HepG2 (cell line): ENCODE measurements at regions of chr17 and their contacts with region 1.

Region 1: DNA sequence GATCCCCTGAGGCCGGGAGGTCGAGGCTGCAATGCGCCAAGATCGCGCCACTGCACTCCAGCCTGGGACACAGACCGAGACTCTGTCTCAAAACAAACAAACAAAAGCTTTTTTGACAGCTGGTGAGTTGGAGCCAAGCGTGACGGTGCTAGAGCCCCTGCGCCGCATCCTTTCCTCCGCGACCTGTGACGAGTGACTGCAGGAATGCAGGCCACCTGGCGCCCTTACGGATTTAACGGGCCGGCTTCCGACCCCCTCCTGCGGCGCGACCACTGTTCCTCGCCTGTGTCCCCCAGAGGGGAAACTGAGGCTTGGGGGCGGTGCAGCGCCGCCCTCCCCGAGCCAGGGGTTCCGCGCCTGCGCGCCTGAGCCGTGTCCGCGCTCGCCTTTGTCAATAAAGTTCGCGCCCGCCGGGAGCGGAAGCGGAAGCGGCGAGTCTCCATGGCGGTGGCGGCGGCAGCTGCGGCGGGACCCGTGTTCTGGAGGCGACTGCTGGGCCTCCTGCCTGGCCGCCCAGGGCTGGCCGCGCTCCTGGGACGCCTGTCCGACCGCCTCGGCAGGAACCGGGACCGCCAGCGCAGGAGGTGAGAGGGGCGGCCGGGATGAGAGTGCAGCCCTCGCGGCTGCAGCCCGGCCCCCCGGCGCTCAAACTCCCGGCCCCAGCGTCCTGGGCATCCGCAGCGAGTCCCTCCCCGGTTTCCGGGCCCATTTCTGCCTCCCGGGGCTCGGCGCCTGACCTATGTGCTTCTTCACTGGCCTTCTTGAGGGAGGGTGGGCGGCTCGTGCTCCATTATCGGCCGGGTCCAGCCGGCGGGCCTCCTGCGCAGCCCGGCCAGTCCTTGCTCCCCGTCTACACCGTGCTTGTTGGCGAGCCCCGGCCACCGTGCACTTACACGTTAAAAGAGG is at the start of gene PGS1:
- DNase-seq: no peak
- ATAC-seq: peak; percentile 72
- H3K4me3 ChIP-seq: peak within 1 kb of the TSS; percentile 97 to 98 (median 97)
- H3K27ac ChIP-seq: peak within 1 kb of the TSS; percentile 80
- H3K4me1 ChIP-seq: peaks cover 78% of the 10 kb centered on the region
- H3K27me3 ChIP-seq: peaks cover 2 to 8% of the 10 kb centered on the region in 2 experiments; a peak in 1 of 5 replicates
- CTCF ChIP-seq: peak; percentile 40
- EP300 ChIP-seq: peak; percentile 15 to 72; a peak in 2 of 4 replicates
- POLR2A ChIP-seq: peak in 1 of 2 experiments; percentile 77; a peak in 2 of 4 replicates
- RAD21 ChIP-seq: peak; percentile 64; the same call in 1 of the 2 replicates
- total RNA-seq, gene PGS1: 18.8 and 25.9 TPM in 2 replicates

Region 2: GRCh38 chr17:78313735-78314648 is 64.5 kb before region 1 on chr17:
- CTCF ChIA-PET with region 1: no interaction called
- POLR2A ChIA-PET with region 1: no interaction called
- in situ Hi-C with region 1: no loop called
- intact Hi-C with region 1: loop called (anchors 10 kb)
- DNase-seq: peak; percentile 57
- ATAC-seq: peak; percentile 66
- H3K4me3 ChIP-seq: peak overlapping the region; percentile 17 to 67 (median 45); a peak in 5 of 6 replicates
- H3K27ac ChIP-seq: no peak overlapping the region
- H3K4me1 ChIP-seq: peaks cover 52% of the 10 kb centered on the region
- H3K27me3 ChIP-seq: peaks cover 28 to 72% of the 10 kb centered on the region in 2 experiments
- CTCF ChIP-seq: peak; percentile 23
- EP300 ChIP-seq: no peak
- POLR2A ChIP-seq: no peak
- RAD21 ChIP-seq: 0 out of 2 replicates have a peak, but pooled peaks have one; percentile 17

Region 3: GRCh38 chr17:78341559-78342448 is 36.7 kb before region 1 on chr17:
- CTCF ChIA-PET with region 1: no interaction called
- POLR2A ChIA-PET with region 1: no interaction called
- in situ Hi-C with region 1: no loop called
- intact Hi-C with region 1: no loop called
- DNase-seq: no peak
- ATAC-seq: peak; percentile 55
- H3K4me3 ChIP-seq: peak overlapping the region; percentile 20 to 58 (median 25); a peak in 3 of 6 replicates
- H3K27ac ChIP-seq: no peak overlapping the region
- H3K4me1 ChIP-seq: peaks cover 18% of the 10 kb centered on the region
- H3K27me3 ChIP-seq: peaks cover 38 to 89% of the 10 kb centered on the region in 2 experiments
- CTCF ChIP-seq: no peak
- EP300 ChIP-seq: no peak
- POLR2A ChIP-seq: no peak
- RAD21 ChIP-seq: no peak

Region 4: GRCh38 chr17:78360371-78361224 is 17.9 kb before region 1 on chr17:
- CTCF ChIA-PET with region 1: interaction called, 5 read pairs
- POLR2A ChIA-PET with region 1: interaction called, 13 read pairs
- in situ Hi-C with region 1: no loop called
- intact Hi-C with region 1: loop called (anchors 2 kb)
- DNase-seq: peak; percentile 80
- ATAC-seq: peak; percentile 86
- H3K4me3 ChIP-seq: peak overlapping the region; percentile 57 to 87 (median 61)
- H3K27ac ChIP-seq: no peak overlapping the region
- H3K4me1 ChIP-seq: peaks cover 52% of the 10 kb centered on the region
- H3K27me3 ChIP-seq: peaks cover 10 to 67% of the 10 kb centered on the region in 2 experiments; a peak in 4 of 5 replicates
- CTCF ChIP-seq: peak; percentile 100
- EP300 ChIP-seq: no peak
- POLR2A ChIP-seq: no peak
- RAD21 ChIP-seq: peak; percentile 96